ENCODE measurements at regions of chr1 and their contacts with region 1.

Region 1: GRCh38 chr1:20194757-20195461 is 8.6 kb upstream of the PLA2G2C start:
- DNase-seq: peak; percentile 61 to 82
- ATAC-seq: peak; percentile 68 to 85 (median 81)
- H3K4me3 ChIP-seq: no peak overlapping the region
- H3K4me3 Mint-ChIP-seq: no peak overlapping the region
- H3K27ac ChIP-seq: no peak overlapping the region
- H3K27ac Mint-ChIP-seq: no peak overlapping the region
- H3K4me1 ChIP-seq: peaks cover 6% of the 10 kb centered on the region
- H3K4me1 Mint-ChIP-seq: no peaks in the 10 kb centered on the region
- H3K27me3 ChIP-seq: no peaks in the 10 kb centered on the region
- H3K27me3 Mint-ChIP-seq: peaks cover 2 to 8% of the 10 kb centered on the region in 2 donors
- CTCF ChIP-seq: peak; percentile 82

Region 2: GRCh38 chr1:19596714-19597495 is 598.0 kb before region 1 on chr1:
- intact Hi-C with region 1: no loop called
- DNase-seq: peak; percentile 94 to 100
- ATAC-seq: peak; percentile 77 to 89 (median 80)
- H3K4me3 ChIP-seq: peak overlapping the region; percentile 78
- H3K4me3 Mint-ChIP-seq: peak overlapping the region; percentile 100
- H3K27ac ChIP-seq: peak overlapping the region; percentile 99
- H3K27ac Mint-ChIP-seq: peak overlapping the region; percentile 98 to 100
- H3K4me1 ChIP-seq: peaks cover 29% of the 10 kb centered on the region
- H3K4me1 Mint-ChIP-seq: peaks cover 39 to 45% of the 10 kb centered on the region in 2 donors
- H3K27me3 ChIP-seq: no peaks in the 10 kb centered on the region
- H3K27me3 Mint-ChIP-seq: no peaks in the 10 kb centered on the region
- CTCF ChIP-seq: no peak

Region 3: DNA sequence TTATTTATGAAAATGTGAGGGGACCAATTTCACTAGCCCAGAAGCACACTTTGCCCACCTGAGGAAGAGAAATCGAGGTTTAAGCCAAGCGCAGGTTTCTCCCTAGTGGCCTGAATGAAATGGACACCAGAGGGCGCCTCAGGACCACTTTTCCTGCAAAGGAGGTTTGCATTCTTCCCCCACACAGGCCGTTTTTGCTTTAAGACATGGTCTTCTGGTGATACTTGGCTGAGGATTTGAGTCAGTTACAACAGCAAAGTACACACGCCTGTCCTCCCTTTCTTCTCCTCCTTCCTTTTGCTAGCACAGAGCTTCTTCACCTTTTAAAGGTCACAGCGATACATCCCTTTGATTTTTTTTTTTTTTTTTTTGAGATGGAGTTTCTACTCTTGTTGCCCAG is 276.9 kb before region 1 on chr1:
- intact Hi-C with region 1: loop called (anchors 1 kb)
- DNase-seq: peak; percentile 68 to 89
- ATAC-seq: peak; percentile 54 to 79 (median 55)
- H3K4me3 ChIP-seq: no peak overlapping the region
- H3K4me3 Mint-ChIP-seq: no peak overlapping the region
- H3K27ac ChIP-seq: no peak overlapping the region
- H3K27ac Mint-ChIP-seq: no peak overlapping the region
- H3K4me1 ChIP-seq: no peaks in the 10 kb centered on the region
- H3K4me1 Mint-ChIP-seq: peaks cover 4 to 6% of the 10 kb centered on the region in 2 donors
- H3K27me3 ChIP-seq: no peaks in the 10 kb centered on the region
- H3K27me3 Mint-ChIP-seq: peaks cover 0 to 3% of the 10 kb centered on the region in 2 donors
- CTCF ChIP-seq: peak; percentile 77

Region 4: DNA sequence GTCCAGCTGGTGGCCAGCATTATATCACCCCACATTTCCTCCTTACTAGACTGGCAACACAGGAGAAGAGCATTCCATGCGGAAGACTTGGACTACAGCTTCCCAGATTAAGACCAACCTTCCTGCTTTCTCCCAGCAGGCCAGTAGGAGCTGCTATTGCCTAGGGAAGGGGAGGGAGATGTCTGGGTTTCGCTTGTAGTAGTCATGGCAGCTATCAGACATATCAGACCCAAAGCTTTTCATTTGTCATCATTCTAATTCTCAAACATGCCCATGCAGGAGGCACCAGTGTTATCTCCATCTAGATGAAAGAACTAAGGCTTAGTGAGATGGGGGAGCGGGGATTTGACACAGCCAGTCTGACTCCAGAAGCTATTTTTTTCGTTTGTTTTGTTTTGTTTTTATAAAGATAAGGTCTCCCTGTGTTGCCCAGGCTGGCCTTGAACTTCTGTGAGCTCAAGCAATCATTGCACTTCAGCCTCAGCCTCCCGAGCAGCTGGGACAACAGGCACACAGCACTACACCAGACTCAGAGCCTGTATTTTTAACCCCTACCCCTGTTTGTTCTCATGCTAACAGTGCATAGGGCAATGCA is 220.0 kb before region 1 on chr1:
- intact Hi-C with region 1: loop called (anchors 1 kb)
- DNase-seq: peak in 1 of 2 donors; percentile 57
- ATAC-seq: peak; percentile 49 to 75 (median 60)
- H3K4me3 ChIP-seq: no peak overlapping the region
- H3K4me3 Mint-ChIP-seq: no peak overlapping the region
- H3K27ac ChIP-seq: no peak overlapping the region
- H3K27ac Mint-ChIP-seq: no peak overlapping the region
- H3K4me1 ChIP-seq: no peaks in the 10 kb centered on the region
- H3K4me1 Mint-ChIP-seq: no peaks in the 10 kb centered on the region
- H3K27me3 ChIP-seq: no peaks in the 10 kb centered on the region
- H3K27me3 Mint-ChIP-seq: peaks cover 30 to 32% of the 10 kb centered on the region in 2 donors
- CTCF ChIP-seq: peak; percentile 71

Region 5: DNA sequence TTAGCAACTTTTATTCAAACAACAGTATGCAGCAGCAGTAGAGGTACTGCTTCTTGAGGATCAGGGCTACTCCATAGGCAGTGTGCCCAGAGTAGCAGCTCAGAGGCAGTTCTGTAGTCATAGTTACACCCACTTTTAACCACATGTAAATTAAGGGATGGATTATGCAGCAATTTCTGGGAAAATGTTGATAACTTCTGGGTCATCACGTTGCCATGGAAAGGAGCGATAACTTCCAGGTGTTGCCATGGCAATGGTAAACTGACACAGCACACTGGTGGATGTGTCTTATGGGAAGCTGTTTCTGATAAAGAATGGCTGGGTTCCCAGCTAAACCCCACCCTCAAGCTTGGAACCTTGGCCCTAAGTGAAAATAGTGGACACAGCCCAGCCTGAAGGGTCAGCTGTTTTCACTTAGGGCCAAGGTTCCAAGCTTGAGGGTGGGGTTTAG is 186.5 kb before region 1 on chr1:
- intact Hi-C with region 1: no loop called
- DNase-seq: no peak
- ATAC-seq: no peak
- H3K4me3 ChIP-seq: no peak overlapping the region
- H3K4me3 Mint-ChIP-seq: no peak overlapping the region
- H3K27ac ChIP-seq: no peak overlapping the region
- H3K27ac Mint-ChIP-seq: no peak overlapping the region
- H3K4me1 ChIP-seq: no peaks in the 10 kb centered on the region
- H3K4me1 Mint-ChIP-seq: no peaks in the 10 kb centered on the region
- H3K27me3 ChIP-seq: peaks cover 3% of the 10 kb centered on the region
- H3K27me3 Mint-ChIP-seq: peaks cover 34 to 46% of the 10 kb centered on the region in 2 donors
- CTCF ChIP-seq: no peak

Region 6: GRCh38 chr1:20087668-20088067 is 107.2 kb before region 1 on chr1:
- intact Hi-C with region 1: no loop called
- DNase-seq: no peak
- ATAC-seq: no peak
- H3K4me3 ChIP-seq: no peak overlapping the region
- H3K4me3 Mint-ChIP-seq: no peak overlapping the region
- H3K27ac ChIP-seq: no peak overlapping the region
- H3K27ac Mint-ChIP-seq: no peak overlapping the region
- H3K4me1 ChIP-seq: no peaks in the 10 kb centered on the region
- H3K4me1 Mint-ChIP-seq: peaks cover 0 to 3% of the 10 kb centered on the region in 2 donors
- H3K27me3 ChIP-seq: no peaks in the 10 kb centered on the region
- H3K27me3 Mint-ChIP-seq: peaks cover 17 to 28% of the 10 kb centered on the region in 2 donors
- CTCF ChIP-seq: no peak

Region 7: DNA sequence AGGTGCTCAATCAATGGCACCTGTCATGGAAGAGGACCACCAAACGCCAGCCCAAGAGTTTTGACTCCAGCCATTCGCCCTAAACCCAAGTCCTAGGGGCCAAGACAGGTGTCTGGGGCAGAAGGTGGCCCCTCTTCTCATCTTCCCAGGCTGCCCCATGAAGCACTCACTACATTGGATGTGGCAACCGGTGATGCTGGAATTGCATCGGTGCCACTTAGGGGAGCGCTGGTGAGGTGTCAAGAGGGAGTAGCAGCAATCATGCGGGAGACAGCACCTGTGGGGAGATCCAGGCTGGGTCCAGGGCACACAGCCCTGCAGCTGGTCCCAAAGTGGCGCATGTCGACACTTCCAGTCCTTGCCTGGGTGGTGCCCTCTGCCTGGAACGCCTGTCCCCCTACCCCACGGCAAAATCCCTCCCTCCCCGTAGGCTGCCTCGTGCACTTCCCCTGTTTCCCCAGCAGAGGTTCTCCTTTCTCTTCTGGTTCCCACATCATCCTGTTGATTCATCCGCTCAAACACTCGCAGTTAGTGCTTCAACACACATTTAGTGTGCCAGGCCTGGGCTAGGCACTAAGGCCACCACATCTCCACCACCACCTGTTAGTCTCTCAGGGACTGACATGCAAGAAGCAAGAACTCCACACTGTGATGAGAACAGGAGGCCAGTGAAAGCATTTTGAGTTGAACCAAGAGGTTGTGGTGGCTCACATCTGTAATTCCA is 94.1 kb before region 1 on chr1:
- intact Hi-C with region 1: loop called (anchors 2 kb)
- DNase-seq: peak in 1 of 2 donors; percentile 47
- ATAC-seq: peak in 1 of 3 donors; percentile 66
- H3K4me3 ChIP-seq: no peak overlapping the region
- H3K4me3 Mint-ChIP-seq: no peak overlapping the region
- H3K27ac ChIP-seq: no peak overlapping the region
- H3K27ac Mint-ChIP-seq: no peak overlapping the region
- H3K4me1 ChIP-seq: peaks cover 4% of the 10 kb centered on the region
- H3K4me1 Mint-ChIP-seq: no peaks in the 10 kb centered on the region
- H3K27me3 ChIP-seq: no peaks in the 10 kb centered on the region
- H3K27me3 Mint-ChIP-seq: no peaks in the 10 kb centered on the region
- CTCF ChIP-seq: peak; percentile 11

Measured in natural killer cell (primary cell).